Heart left ventricle (tissue), 16 donors: ENCODE measurements at regions of chr10 and their contacts with region 1.

Region 1: DNA sequence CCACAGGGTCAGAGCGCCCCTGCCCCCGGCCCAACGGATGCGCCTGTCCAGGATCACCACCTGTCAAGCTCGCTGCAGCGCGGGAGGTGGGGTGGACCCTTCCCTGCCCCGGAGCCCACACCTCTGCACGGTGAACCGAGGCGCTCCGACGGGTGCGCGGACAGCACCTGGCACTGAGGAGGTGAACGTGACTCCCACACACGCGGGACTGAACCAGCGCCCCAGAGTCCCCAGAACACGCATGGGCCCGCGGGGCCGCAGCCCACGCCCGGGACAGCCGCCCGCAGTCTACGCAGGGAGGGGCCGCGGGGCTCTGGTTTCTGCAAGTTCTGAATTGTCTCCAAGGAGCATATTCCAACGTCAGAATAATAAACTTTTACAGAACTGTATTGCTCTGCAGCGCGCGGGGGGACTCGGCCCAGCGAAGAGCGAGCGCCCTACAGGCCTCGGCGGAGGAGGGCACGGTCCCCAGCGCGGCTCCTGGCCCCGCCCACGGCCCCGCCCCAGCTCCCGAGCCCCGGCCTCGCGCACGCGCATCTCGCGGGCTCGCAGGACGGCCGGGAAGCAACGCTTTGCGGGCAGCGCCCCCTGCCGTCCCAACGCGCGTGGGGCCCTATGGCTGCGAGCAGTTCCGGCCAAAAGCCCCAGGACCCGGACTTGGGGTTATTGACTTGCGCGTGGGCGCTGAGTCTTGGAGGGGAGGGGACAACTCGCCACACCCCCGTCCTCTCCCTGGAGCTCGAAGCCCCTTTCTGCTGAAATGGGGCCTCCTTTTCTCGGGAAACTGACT is 29.7 kb downstream of the OAT start:
- DNase-seq: peak; percentile 85 to 95 (median 91)
- ATAC-seq: peak; percentile 92 to 100 (median 98)
- H3K4me3 ChIP-seq: peak overlapping the region; percentile 28 to 77 (median 60)
- H3K27ac ChIP-seq: peak overlapping the region in 5 of 12 donors; percentile 34 to 69 (median 48)
- H3K4me1 ChIP-seq: peaks cover 0 to 11% (median 1%) of the 10 kb centered on the region in 12 donors
- H3K27me3 ChIP-seq: no peaks in the 10 kb centered on the region
- CTCF ChIP-seq: peak; percentile 87 to 99 (median 96)
- POLR2A ChIP-seq: peak in 1 of 2 donors; percentile 49

Region 2: GRCh38 chr10:123573236-123574108 is 815.5 kb before region 1 on chr10:
- intact Hi-C with region 1: loop called in 1 of 10 experiments (anchors 10 kb)
- DNase-seq: no peak
- ATAC-seq: no peak
- H3K4me3 ChIP-seq: no peak overlapping the region
- H3K27ac ChIP-seq: no peak overlapping the region
- H3K4me1 ChIP-seq: no peaks in the 10 kb centered on the region
- H3K27me3 ChIP-seq: peaks cover 4 to 41% (median 13%) of the 10 kb centered on the region in 9 donors
- CTCF ChIP-seq: peak; percentile 18 to 54 (median 36)
- POLR2A ChIP-seq: no peak

Region 3: DNA sequence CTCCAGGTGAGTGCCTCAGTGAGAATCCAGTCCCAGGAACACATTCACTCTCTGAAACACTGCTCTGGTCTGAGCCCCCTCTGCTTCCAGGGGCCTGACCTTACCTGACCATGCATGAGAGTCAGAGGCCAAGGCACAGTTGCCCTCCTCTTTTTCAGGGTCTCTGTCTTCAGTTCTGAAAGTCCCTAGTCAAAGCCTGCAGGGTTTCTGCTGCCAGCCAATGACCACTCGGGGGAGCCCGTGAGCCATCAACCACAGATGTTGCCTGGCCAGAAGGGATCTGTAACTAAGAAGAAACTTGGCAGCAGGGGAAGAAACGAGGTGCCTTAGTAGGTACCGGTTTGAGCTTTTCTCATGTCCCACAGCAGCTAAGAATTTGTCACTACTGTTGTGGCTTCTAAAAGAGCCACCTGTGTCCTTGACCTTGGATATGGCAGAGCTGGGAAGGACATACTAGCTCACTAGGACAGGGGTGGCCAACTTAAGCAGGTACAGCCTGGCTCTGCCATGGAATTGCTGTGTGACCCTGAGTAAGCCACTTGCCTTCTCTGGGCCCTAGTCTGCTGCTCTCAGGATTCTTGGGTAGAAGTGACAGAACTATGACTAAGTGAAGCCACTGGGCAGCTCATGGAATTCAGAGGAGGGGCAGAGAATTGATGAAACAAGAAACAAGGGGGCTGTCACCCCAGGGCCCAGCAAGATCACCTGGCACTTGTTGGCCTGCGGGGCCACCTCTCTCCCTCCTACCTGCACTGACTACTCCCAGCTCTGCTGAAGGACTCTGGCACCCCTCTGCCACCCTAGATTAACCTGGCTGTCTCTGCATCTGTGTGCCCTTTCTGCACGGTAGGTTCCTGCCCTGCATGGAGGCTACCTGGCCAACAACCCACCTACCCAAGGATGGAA is 806.7 kb before region 1 on chr10:
- intact Hi-C with region 1: loop called in 8 of 10 experiments (anchors 5 to 10 kb)
- DNase-seq: peak; percentile 58 to 77 (median 73)
- ATAC-seq: peak in 3 of 4 donors; percentile 69 to 79 (median 70)
- H3K4me3 ChIP-seq: no peak overlapping the region
- H3K27ac ChIP-seq: no peak overlapping the region
- H3K4me1 ChIP-seq: peaks cover 0 to 11% (median 0%) of the 10 kb centered on the region in 12 donors
- H3K27me3 ChIP-seq: peaks cover 0 to 59% (median 21%) of the 10 kb centered on the region in 9 donors
- CTCF ChIP-seq: peak; percentile 68 to 89 (median 77)
- POLR2A ChIP-seq: no peak

Region 4: GRCh38 chr10:123687764-123688163 is 701.3 kb before region 1 on chr10:
- intact Hi-C with region 1: no loop called
- DNase-seq: no peak
- ATAC-seq: no peak
- H3K4me3 ChIP-seq: no peak overlapping the region
- H3K27ac ChIP-seq: no peak overlapping the region
- H3K4me1 ChIP-seq: no peaks in the 10 kb centered on the region
- H3K27me3 ChIP-seq: peaks cover 0 to 5% (median 0%) of the 10 kb centered on the region in 9 donors
- CTCF ChIP-seq: no peak
- POLR2A ChIP-seq: no peak

Region 5: GRCh38 chr10:123994417-123995081 is 394.5 kb before region 1 on chr10:
- intact Hi-C with region 1: loop called (anchors 1 to 2 kb)
- DNase-seq: peak; percentile 80 to 93 (median 85)
- ATAC-seq: peak; percentile 77 to 88 (median 82)
- H3K4me3 ChIP-seq: peak overlapping the region in 7 of 12 donors; percentile 5 to 35 (median 20)
- H3K27ac ChIP-seq: no peak overlapping the region
- H3K4me1 ChIP-seq: peaks cover 0 to 45% (median 14%) of the 10 kb centered on the region in 12 donors
- H3K27me3 ChIP-seq: peaks cover 15 to 56% (median 41%) of the 10 kb centered on the region in 9 donors
- CTCF ChIP-seq: peak; percentile 97 to 100 (median 99)
- POLR2A ChIP-seq: no peak

Region 6: DNA sequence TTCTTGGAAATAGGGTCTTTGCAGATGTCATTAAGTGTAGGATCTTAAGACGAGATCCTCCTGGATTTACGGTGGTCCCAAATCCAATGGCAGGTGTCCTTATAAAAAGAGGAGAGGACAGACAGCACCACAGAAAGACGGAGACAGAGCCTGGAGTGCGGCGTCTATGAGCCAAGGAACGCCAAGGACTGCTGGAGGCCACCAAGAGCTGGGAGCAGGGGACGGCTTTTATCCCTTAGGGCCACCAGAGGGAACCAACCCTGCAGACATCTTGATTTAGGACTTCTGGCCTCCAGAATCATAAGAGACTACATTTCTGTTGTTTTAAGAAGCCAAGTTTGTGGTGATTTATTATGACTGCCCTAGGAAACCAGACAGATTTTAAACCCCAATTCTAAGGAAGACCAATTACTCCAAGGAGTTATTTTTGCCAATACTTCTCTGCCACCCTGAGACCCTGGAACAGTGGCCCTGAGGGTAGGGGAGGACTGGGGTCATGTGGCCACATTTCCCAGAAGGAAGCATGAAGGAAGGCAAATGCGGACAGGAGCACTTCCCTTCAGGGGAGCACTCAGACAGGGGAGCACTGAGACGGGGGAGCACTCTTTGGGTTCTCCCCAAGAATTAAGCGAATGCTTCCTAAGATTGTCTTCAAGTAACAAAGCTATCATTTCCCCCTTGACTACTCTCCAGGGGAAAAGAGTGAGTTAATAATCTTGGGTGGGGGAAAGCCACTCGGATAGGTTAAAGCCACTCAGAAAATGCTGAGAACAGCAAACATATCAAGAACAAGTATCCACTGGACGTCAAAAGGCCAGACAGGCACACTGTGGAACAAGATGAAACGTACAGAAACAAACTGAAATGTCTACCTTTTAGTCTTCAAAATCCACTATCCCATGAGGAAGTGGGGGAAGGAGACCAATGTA is 363.1 kb before region 1 on chr10:
- intact Hi-C with region 1: loop called in 1 of 10 experiments (anchors 10 kb)
- DNase-seq: peak in 2 of 5 donors; percentile 17 to 54
- ATAC-seq: peak in 2 of 4 donors; percentile 64 to 73
- H3K4me3 ChIP-seq: no peak overlapping the region
- H3K27ac ChIP-seq: no peak overlapping the region
- H3K4me1 ChIP-seq: peaks cover 0 to 4% (median 0%) of the 10 kb centered on the region in 12 donors
- H3K27me3 ChIP-seq: peaks cover 0 to 12% (median 0%) of the 10 kb centered on the region in 9 donors
- CTCF ChIP-seq: peak; percentile 30 to 57 (median 39)
- POLR2A ChIP-seq: no peak

Region 7: DNA sequence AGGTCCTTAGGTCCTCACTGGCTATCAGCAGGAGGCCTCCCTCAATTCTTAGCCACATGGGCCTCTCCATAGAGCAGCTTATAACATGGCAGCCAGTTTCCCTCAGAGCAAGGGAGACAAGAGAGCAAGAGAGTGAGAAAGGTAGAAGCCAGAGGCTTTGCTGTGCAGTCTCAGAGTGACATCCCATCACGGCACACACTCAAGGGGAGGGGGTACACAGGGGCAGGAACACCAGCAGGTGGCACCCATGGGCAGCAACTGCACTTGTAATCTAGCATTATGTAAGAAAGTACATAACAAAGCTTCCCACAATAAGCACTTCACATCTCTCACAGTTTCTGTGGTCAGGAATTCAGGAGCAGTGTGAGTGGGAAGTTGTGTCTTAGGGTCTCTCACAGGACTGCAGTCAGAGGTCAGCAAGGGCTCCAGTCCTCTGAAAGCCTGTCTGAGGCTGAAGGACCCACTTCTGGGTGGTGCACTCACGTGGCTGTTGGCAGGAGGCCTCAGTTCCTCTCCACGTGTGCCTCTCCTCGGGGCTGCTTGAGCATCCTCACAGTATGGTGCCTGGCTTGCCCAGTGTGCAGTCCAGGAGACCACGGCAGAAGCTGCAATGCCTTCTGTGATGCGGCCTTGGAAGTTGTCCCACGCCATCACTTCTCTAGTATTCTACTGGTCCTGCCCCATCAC is 129.7 kb before region 1 on chr10:
- intact Hi-C with region 1: loop called in 3 of 10 experiments (anchors 10 kb)
- DNase-seq: no peak
- ATAC-seq: peak in 1 of 4 donors; percentile 19
- H3K4me3 ChIP-seq: no peak overlapping the region
- H3K27ac ChIP-seq: no peak overlapping the region
- H3K4me1 ChIP-seq: no peaks in the 10 kb centered on the region
- H3K27me3 ChIP-seq: no peaks in the 10 kb centered on the region
- CTCF ChIP-seq: no peak
- POLR2A ChIP-seq: no peak

Region 8: GRCh38 chr10:124267231-124267885 is 121.7 kb before region 1 on chr10:
- intact Hi-C with region 1: loop called in 1 of 10 experiments (anchors 10 kb)
- DNase-seq: peak in 1 of 5 donors; percentile 54
- ATAC-seq: peak; percentile 47 to 88 (median 76)
- H3K4me3 ChIP-seq: no peak overlapping the region
- H3K27ac ChIP-seq: no peak overlapping the region
- H3K4me1 ChIP-seq: peaks cover 0 to 14% (median 0%) of the 10 kb centered on the region in 12 donors
- H3K27me3 ChIP-seq: no peaks in the 10 kb centered on the region
- CTCF ChIP-seq: no peak
- POLR2A ChIP-seq: no peak